T-cell (primary cell): ENCODE measurements at regions of chr2 and their contacts with region 1.

Region 1: DNA sequence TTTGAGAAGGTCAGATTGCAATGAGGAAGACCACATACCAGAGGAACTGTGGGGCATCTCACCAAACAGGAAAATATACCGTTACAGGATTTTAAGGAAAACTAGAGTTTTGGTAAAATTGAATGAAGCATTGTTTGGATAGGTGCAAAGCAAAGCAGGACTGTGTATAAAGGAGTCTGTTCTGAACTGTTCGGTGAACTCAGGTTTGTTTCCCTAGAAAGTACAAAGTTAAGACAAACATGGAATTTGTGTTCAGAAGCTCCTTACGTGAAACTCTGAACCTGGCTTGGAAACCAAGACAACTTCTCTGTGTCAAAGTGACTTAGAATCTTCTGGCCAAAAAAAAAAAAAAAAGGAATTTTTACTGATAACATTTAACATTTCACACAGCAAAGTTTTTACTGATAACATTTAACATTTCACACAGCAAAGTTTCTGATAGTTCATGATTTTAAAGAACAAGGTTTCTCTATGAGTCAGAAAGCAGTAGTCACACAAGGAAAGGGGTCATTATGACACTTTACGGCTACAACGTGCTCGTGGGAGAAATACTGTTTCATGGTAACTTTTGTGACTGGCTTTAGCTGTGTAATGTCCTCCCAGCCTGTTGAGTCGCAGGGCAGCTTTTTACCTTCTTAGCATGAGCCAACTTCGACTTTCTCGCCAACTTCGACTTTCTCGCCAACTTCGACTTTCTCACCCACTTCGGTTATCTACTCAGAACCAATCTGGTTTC is 21.2 kb upstream of the TET3 start:
- DNase-seq: no peak
- ATAC-seq: peak in 2 of 4 experiments; percentile 19 to 63
- H3K4me3 ChIP-seq: no peak overlapping the region
- H3K4me3 Mint-ChIP-seq: no peak overlapping the region
- H3K27ac ChIP-seq: no peak overlapping the region
- H3K27ac Mint-ChIP-seq: peak overlapping the region; percentile 1 to 49
- H3K4me1 ChIP-seq: peaks cover 6 to 15% of the 10 kb centered on the region in 2 experiments
- H3K4me1 Mint-ChIP-seq: peaks cover 30 to 38% (median 32%) of the 10 kb centered on the region in 3 donors
- H3K27me3 ChIP-seq: no peaks in the 10 kb centered on the region
- H3K27me3 Mint-ChIP-seq: no peaks in the 10 kb centered on the region

Region 2: DNA sequence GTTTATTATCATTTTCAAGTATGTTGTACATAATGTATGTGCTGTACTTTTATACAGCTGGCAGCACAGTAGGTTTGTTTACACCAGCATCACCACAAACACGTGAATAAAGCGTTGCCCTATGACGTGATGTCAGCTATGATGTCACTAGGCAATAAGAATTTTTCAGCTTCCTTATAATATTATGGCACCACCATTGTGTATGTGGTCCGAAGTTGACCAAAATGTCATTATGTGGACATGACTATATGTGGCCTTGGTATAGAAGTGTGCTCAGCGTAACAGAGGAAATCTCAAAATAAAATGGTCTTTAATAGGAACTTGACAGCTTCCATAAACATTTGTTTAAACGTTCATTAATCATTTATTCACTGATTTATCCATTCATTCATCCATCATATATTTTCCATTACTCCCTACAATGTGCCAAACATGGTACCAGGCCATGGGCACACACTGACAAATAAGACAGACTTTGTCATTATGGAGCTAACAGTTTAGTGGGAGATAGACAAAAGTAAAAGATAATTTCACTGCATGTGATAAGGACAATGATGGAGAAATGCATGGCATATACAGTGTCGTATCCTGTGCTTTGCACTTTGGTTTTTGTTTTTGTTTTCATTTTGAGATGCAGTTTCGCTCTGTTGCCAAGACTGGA is 51.9 kb before region 1 on chr2:
- CTCF ChIA-PET with region 1: no interaction called
- POLR2A ChIA-PET with region 1: interaction called in 1 of 2 experiments, 14 read pairs
- DNase-seq: no peak
- ATAC-seq: no peak
- H3K4me3 ChIP-seq: no peak overlapping the region
- H3K4me3 Mint-ChIP-seq: no peak overlapping the region
- H3K27ac ChIP-seq: no peak overlapping the region
- H3K27ac Mint-ChIP-seq: no peak overlapping the region
- H3K4me1 ChIP-seq: no peaks in the 10 kb centered on the region
- H3K4me1 Mint-ChIP-seq: peaks cover 0 to 2% (median 0%) of the 10 kb centered on the region in 3 donors
- H3K27me3 ChIP-seq: peaks cover 0 to 9% of the 10 kb centered on the region in 2 experiments
- H3K27me3 Mint-ChIP-seq: no peaks in the 10 kb centered on the region

Region 3: DNA sequence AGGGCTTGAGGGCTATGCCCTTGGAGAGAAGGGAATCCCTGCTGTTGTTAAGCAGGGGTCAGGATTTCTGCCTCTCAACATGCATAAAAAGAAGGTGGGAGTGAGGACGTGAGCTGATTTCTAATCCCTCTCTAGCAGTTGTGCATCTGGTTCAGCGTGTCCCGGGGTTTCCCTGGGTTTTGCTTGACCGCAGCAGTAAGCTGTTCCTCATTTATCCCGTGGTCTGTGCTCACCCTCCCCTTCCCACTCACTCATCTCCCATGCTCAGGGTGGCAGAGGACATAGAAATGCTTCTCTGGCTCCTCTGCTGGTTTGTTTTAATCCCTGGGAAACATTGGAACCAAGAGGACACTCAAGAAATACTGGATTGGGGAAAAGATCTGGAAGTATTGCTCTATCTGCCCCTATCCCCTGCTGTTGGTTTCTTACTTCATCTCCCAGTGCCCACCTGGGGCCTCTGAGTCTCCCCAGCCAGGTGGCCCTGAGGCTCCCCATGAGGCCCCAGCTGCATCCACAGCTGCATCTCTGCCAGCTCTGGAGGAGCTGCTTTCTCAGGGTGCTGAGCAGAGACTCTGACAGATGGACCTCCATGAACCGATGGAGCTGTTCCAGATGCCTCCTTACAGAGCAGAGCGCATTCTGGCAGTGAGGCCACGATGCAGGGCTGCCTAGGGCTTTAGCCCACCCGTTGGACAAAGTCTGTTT is 57.3 kb after region 1 on chr2:
- CTCF ChIA-PET with region 1: no interaction called
- POLR2A ChIA-PET with region 1: interaction called in 1 of 2 experiments, 10 read pairs
- DNase-seq: peak in 1 of 35 experiments; percentile 29
- ATAC-seq: no peak
- H3K4me3 ChIP-seq: no peak overlapping the region
- H3K4me3 Mint-ChIP-seq: peak overlapping the region in 1 of 3 donors; percentile 43
- H3K27ac ChIP-seq: no peak overlapping the region
- H3K27ac Mint-ChIP-seq: peak overlapping the region; percentile 28 to 73
- H3K4me1 ChIP-seq: peaks cover 22 to 42% of the 10 kb centered on the region in 2 experiments
- H3K4me1 Mint-ChIP-seq: peaks cover 65 to 73% (median 68%) of the 10 kb centered on the region in 3 donors
- H3K27me3 ChIP-seq: no peaks in the 10 kb centered on the region
- H3K27me3 Mint-ChIP-seq: no peaks in the 10 kb centered on the region